ENCODE measurements at regions of chr1 and their contacts with region 1.

Region 1: DNA sequence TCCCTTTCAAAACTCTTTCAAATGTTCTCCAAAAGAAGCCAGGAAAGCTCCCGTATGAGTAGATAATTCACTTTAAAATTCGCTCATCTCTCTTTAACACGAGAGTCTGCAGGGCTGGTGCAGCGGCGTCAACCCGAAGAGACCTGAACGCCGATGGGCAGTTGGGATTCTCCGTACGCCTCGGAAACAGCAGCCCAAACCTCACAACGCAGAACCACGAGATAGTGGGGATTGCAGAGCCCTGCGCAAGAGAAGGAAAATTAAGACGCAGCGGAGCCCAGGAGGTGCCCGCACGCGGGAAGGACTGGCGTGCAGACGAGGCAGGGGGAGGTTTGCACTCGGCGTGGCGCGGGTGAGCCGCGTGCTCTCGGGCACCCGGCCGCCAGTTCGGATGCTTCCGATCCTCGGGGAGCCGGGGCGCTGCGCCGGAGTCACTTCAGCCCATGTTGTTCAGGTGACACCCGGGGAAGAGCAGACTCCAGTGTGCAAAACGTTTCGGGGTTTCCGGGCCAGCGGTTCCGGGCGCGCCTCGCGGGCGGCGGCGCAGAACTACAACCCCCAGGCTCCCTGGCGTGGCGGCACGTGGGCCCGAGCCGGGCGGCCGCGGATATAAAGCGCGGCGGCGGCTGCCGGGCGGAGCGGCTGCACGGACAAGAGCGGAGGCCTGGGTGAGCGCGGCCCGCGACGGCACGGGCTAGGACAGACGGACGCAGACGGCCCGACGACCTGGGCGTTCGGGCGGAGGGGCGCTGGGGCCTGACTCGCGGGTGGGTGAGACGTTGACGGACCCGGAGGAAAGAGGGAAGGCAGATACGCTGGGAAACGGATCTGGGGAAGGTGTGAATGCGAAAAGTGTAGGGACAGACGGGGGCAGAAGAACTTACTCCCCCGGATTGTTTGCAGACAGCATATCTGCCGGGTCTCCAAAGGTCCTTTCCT is at the start of gene NPL:
- DNase-seq: peak; percentile 72 to 89
- H3K4me3 ChIP-seq: peak within 1 kb of the TSS; percentile 76
- H3K4me3 Mint-ChIP-seq: peak within 1 kb of the TSS; percentile 97
- H3K27ac Mint-ChIP-seq: peak within 1 kb of the TSS; percentile 63
- H3K4me1 ChIP-seq: peaks cover 9% of the 10 kb centered on the region; the same call in 1 of the 2 replicates
- H3K4me1 Mint-ChIP-seq: peaks cover 6% of the 10 kb centered on the region
- H3K27me3 ChIP-seq: no peaks in the 10 kb centered on the region; the same call in 1 of the 2 replicates
- H3K27me3 Mint-ChIP-seq: peaks cover 7% of the 10 kb centered on the region
- CTCF ChIP-seq: no peak
- total RNA-seq, gene NPL: 3.5 and 4.8 TPM in 2 replicates

Region 2: DNA sequence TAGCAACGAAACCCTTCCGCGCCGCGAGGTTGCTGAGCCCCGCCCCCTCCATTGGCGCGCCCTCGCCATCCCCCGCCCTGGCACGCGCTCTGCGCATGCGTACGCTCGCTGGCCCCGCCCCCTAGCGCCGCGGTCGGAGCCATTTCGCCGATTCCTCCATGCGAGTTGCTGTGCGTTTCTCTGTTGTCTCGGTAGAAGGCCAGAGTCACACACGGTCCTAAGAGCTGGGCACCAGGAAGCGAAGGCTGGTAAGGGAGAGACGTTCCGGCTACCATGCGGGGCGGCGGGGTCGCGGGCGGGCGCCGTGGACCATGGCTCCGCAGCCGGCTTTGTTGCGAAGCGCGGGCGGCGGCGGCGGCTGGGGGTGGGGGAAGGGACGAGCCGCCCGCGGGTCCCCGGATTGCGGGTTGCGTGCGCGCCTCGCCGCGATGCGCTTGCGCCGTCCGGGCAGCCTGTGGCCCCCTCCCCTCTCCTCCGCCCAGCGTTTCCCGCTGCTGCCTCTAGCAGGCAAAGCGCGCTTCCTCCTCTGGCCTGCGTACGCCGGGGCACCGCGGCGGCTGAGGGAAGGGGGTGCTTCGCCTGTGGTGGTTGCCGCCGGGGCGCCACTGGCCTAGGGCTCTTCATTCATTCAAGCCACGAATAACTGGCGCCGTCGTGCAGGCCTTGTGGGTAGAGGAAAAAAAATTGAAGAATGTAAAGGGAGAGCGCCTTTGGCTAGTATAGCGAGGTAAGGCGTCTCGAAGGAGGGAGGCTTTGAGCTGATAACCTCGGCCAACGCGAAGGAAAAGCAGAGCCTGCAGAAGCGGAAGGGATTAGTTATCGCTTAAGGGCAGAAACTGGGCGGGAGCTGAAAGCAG is 50.0 kb after region 1 on chr1 and contains the start of gene DHX9:
- CTCF ChIA-PET with region 1: no interaction called
- POLR2A ChIA-PET with region 1: no interaction called
- intact Hi-C with region 1: loop called (anchors 2 kb)
- DNase-seq: peak; percentile 92 to 96
- H3K4me3 ChIP-seq: peak within 1 kb of the TSS; percentile 76
- H3K4me3 Mint-ChIP-seq: peak within 1 kb of the TSS; percentile 93
- H3K27ac Mint-ChIP-seq: peak within 1 kb of the TSS; percentile 93
- H3K4me1 ChIP-seq: peaks cover 8% of the 10 kb centered on the region
- H3K4me1 Mint-ChIP-seq: peaks cover 33% of the 10 kb centered on the region
- H3K27me3 ChIP-seq: no peaks in the 10 kb centered on the region
- H3K27me3 Mint-ChIP-seq: no peaks in the 10 kb centered on the region
- CTCF ChIP-seq: peak in 1 of 2 experiments; percentile 20
- total RNA-seq, gene DHX9: 218 and 234 TPM in 2 replicates